Dendritic cell treated with granulocyte-macrophage colony-stimulating factor and Interleukin-4, amounts not matched to agents 40 ng/mL and 50 ng/mL, for 4 days (primary cell): ENCODE measurements at regions of chr7 and their contacts with region 1.

Region 1: DNA sequence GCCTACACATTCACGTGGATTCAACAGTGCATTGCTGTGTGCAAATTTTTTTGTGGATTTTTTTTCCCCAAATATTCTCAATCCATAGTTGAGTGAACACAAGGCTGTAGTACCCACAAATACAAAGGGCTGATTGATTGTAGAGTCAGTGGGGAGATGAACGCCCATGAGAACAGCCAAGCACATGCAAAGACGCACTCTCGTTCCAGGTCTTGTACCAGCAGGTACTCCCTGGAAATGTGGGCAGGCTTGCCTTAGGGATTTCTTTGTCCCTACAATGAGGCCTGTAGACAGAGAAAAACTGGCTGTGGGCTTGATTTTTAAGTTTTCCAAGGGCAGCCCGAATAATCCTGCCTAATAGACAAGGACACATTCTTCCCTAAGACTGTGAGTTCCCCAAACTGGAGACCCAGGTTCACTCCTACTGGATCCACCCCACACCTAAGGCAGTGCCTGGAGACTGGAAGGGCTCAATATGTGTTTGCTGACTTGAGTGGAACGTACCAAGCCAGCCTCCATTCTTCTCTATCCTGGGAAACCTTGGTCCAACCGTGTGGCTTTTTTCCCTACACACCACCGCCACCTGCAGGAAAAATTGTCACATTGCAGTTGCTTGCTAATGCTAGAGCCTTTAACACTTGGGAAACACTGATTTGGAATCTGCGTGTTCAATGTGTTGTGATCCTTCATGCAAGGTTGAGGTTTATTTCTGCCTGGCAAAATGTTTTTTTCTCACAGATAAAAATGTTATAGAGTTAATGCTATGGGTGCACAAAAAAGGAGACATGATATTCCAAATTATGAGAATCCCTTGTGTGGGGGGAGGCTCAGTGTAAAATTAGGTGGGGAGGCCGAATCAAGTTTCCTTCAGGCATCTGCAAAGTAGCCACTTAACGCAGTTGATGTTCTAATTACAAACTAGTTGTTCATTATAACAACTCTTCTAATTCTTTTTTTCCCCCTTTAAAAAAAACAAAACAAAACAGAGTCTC is 49.3 kb downstream of the PPP1R17 start:
- H3K4me3 Mint-ChIP-seq: no peak overlapping the region
- H3K27ac Mint-ChIP-seq: no peak overlapping the region
- H3K4me1 Mint-ChIP-seq: no peaks in the 10 kb centered on the region
- H3K27me3 Mint-ChIP-seq: no peaks in the 10 kb centered on the region

Region 2: GRCh38 chr7:31134246-31135188 is 601.8 kb before region 1 on chr7:
- intact Hi-C with region 1: loop called (anchors 5 kb)
- H3K4me3 Mint-ChIP-seq: no peak overlapping the region
- H3K27ac Mint-ChIP-seq: no peak overlapping the region
- H3K4me1 Mint-ChIP-seq: peaks cover 5% of the 10 kb centered on the region
- H3K27me3 Mint-ChIP-seq: peaks cover 5% of the 10 kb centered on the region

Region 3: GRCh38 chr7:31373337-31374289 is 362.7 kb before region 1 on chr7:
- intact Hi-C with region 1: loop called (anchors 2 kb)
- H3K4me3 Mint-ChIP-seq: no peak overlapping the region
- H3K27ac Mint-ChIP-seq: no peak overlapping the region
- H3K4me1 Mint-ChIP-seq: no peaks in the 10 kb centered on the region
- H3K27me3 Mint-ChIP-seq: no peaks in the 10 kb centered on the region

Region 4: DNA sequence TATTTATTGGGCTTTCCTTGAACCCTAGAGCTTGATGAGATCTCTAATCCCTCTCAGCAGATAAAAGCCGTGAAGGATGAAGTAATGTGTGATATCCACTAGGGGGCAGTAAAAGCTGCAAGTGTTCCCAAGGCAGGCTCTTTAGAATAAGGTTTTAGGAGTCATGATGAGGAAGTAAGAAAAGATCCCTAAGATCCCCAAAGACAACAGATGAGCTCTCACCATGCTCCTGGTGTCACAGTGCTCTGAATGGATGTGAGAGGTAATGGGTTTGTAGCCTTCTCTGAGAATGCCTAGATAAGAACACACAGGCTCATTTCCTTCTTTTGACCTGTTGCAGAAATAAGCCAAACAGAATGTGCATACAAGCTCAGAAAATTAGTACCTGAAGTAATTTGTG is 292.8 kb before region 1 on chr7:
- intact Hi-C with region 1: loop called (anchors 1 kb)
- H3K4me3 Mint-ChIP-seq: no peak overlapping the region
- H3K27ac Mint-ChIP-seq: no peak overlapping the region
- H3K4me1 Mint-ChIP-seq: no peaks in the 10 kb centered on the region
- H3K27me3 Mint-ChIP-seq: peaks cover 10% of the 10 kb centered on the region

Region 5: DNA sequence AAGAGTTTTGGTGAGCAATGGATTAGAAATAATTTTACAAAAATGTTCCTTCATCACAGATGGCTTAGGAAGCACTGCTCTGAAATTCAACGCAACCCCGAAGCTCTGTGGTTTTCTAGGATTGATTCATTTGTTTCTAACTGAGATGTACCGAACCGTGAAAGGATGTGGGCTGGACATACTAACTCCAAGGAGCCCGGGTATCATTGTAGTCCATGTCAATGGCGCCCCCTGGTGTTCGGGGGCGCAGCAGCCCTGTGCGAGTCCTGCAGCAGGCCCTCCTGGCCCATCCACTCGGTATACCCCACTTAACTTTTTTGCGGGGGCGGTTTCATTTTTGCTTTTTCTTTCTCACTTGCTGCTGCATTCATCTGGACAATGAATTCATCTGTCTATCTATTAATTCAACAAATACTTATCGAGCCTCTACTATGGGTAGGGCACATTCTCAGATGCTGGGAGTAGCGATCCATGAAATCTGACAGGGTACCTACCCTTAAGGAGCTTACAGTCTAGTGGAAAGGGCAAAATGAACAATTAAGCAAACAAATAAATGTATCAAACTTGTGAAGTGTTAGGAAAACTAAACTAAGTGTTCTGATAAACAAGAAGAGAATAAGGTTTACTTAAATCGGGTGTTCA is 247.6 kb before region 1 on chr7:
- intact Hi-C with region 1: loop called (anchors 5 kb)
- H3K4me3 Mint-ChIP-seq: no peak overlapping the region
- H3K27ac Mint-ChIP-seq: no peak overlapping the region
- H3K4me1 Mint-ChIP-seq: peaks cover 12% of the 10 kb centered on the region
- H3K27me3 Mint-ChIP-seq: peaks cover 9% of the 10 kb centered on the region

Region 6: DNA sequence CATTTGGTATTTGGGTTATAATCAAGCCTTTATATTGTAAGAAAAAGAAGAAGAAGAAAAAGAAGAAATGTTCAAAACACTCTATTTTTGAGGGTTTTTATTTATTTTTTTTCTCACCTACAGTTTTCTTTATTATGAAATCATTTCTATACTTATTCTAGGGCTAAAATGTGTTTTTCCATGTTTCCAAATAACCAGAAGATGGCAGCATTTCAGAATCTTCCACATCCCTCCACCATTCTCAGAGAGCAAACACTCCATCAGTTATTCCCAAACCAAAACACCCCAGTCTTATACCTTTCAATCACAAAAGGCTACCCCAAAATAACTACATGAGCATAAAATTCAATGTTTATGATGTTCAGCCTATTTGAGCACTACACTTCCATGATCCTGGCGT is 88.0 kb before region 1 on chr7:
- intact Hi-C with region 1: loop called (anchors 1 kb)
- H3K4me3 Mint-ChIP-seq: no peak overlapping the region
- H3K27ac Mint-ChIP-seq: no peak overlapping the region
- H3K4me1 Mint-ChIP-seq: peaks cover 20% of the 10 kb centered on the region
- H3K27me3 Mint-ChIP-seq: no peaks in the 10 kb centered on the region